ENCODE measurements at regions of chr3 and their contacts with region 1.

Region 1: DNA sequence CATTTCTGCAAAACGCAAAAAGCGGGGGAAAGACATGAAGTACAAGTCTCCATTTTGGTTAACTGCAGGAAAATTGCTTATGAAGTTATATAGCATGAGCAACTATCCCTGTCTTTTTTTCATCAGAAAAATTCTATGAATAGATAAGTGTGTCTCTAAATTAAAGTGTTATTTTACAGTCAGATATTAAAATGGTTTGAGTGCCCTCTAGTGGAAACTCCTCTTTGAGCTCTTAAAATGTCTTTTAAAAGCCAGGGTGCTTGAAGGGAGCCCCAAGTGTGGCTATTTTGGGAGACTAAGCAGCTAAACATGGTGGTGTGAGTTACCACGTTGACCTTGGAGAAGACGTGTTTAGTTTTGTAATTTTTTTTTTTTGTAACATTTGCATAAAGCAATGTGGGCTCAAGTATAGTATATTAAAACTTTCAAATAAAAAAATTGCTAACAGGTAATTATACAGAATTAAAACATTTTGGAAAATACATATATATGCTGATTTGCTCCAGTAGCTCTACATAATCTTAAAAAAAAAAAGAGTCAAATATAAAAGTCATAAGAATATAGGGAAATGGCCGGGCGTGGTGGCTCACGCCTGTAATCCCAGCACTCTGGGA is 77.2 kb downstream of the PPP2R3A start:
- DNase-seq: no peak

Region 2: GRCh38 chr3:135918580-135918962 is 124.1 kb before region 1 on chr3:
- intact Hi-C with region 1: loop called (anchors 2 kb)
- DNase-seq: no peak

Region 3: DNA sequence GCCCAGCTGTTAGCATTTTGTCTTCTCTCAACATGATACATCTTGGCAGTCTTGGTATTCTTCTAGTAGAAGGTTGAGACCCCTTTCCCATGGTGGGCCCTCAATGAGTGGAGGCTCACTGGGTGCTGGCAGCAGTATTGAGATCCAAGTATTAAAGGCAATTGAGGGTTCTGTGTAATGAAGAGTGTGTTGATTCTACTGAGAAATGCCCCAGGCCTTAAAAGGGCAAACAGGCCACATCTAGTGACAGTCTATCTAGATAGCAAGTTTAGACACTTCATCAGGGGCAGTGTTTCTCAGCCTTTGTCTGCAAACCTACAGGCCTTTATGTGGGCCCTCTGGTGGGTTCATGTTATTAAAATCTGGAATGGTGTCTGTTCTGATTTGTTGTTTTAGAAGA is 67.7 kb before region 1 on chr3:
- intact Hi-C with region 1: no loop called
- DNase-seq: no peak